K562 (cell line): ENCODE measurements at regions of chr18 and their contacts with region 1.

Region 1: DNA sequence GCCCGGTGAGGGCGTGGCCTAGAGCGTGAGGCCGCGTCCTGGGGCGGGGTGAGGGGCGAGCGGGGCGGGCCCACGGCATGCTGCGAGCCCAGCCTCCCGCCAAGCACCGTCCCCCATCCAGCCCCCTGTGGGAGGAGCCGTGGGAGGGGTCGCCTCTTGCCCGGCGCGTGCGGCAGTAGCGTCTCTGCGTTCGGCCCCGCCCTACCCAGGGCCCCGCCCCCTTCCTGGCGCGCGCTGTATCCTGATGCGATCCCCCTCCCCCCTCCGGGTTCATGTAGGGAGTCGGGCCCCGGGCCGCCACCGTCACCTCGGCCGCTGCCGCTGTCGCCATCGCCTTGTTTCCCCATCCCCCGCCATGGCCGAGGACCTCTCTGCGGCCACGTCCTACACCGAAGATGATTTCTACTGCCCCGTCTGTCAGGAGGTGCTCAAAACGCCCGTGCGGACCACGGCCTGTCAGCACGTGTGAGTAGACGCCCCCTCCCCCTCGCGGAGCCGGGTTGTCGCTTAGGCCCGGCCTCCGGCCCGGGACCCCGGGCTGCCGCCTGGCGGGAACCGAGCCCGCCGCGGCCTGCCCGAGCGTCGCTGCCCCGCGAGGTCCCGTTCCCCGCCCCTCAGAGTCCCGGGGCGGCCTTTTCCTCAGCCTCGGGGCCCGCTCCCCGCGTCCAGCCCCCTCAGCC is 888 bp downstream of the RNF138 start:
- DNase-seq: peak; percentile 98 to 99 (median 99)
- ATAC-seq: peak; percentile 93
- H3K4me3 ChIP-seq: peak overlapping the region; percentile 77
- H3K27ac ChIP-seq: peak overlapping the region; percentile 98
- H3K4me1 ChIP-seq: peaks cover 28 to 31% of the 10 kb centered on the region in 2 experiments; a peak in 4 of 5 replicates
- H3K27me3 ChIP-seq: no peaks in the 10 kb centered on the region
- CTCF ChIP-seq: no peak
- EP300 ChIP-seq: no peak
- POLR2A ChIP-seq: peak; percentile 77
- RAD21 ChIP-seq: no peak

Region 2: GRCh38 chr18:32018331-32019250 is 74.0 kb before region 1 on chr18 and contains the start of gene RNF125:
- CTCF ChIA-PET with region 1: no interaction called
- POLR2A ChIA-PET with region 1: no interaction called
- in situ Hi-C with region 1: no loop called
- intact Hi-C with region 1: loop called (anchors 2 kb)
- DNase-seq: peak; percentile 65 to 92 (median 78)
- ATAC-seq: peak; percentile 96
- H3K4me3 ChIP-seq: peak within 1 kb of the TSS; percentile 26
- H3K27ac ChIP-seq: no peak within 1 kb of the TSS
- H3K4me1 ChIP-seq: peaks cover 3 to 15% of the 10 kb centered on the region in 2 experiments; a peak in 3 of 5 replicates
- H3K27me3 ChIP-seq: peaks cover 30 to 46% of the 10 kb centered on the region in 2 experiments
- CTCF ChIP-seq: no peak
- EP300 ChIP-seq: peak; percentile 39; the same call in 1 of the 2 replicates
- POLR2A ChIP-seq: no peak
- RAD21 ChIP-seq: no peak
- polyA plus RNA-seq, gene RNF125: 0.01 TPM in 1 of 2 experiments, not detected in the other

Region 3: GRCh38 chr18:32110005-32110404 is 17.4 kb after region 1 on chr18:
- CTCF ChIA-PET with region 1: no interaction called
- POLR2A ChIA-PET with region 1: interaction called, 11 read pairs
- in situ Hi-C with region 1: no loop called
- intact Hi-C with region 1: no loop called
- DNase-seq: no peak
- ATAC-seq: 0 out of 3 replicates have a peak, but pooled peaks have one; percentile 15
- H3K4me3 ChIP-seq: no peak overlapping the region
- H3K27ac ChIP-seq: no peak overlapping the region
- H3K4me1 ChIP-seq: peaks cover 0 to 2% of the 10 kb centered on the region in 2 experiments; a peak in 1 of 5 replicates
- H3K27me3 ChIP-seq: no peaks in the 10 kb centered on the region
- CTCF ChIP-seq: no peak
- EP300 ChIP-seq: no peak
- POLR2A ChIP-seq: no peak
- RAD21 ChIP-seq: no peak